Activated T-helper 1 cell treated with anti-CD3 and anti-CD28 coated beads, Interleukin-12 subunit alpha, Interleukin-12 subunit beta, Interleukin-2, Interleukin-4 antibody, amounts not matched to agents 30 ng/mL and 10 ng/mL and 1 ng/mL, durations not matched to agents 14 hours and 24 hours and 36 hours (primary cell): ENCODE measurements at regions of chr11 and their contacts with region 1.

Region 1: DNA sequence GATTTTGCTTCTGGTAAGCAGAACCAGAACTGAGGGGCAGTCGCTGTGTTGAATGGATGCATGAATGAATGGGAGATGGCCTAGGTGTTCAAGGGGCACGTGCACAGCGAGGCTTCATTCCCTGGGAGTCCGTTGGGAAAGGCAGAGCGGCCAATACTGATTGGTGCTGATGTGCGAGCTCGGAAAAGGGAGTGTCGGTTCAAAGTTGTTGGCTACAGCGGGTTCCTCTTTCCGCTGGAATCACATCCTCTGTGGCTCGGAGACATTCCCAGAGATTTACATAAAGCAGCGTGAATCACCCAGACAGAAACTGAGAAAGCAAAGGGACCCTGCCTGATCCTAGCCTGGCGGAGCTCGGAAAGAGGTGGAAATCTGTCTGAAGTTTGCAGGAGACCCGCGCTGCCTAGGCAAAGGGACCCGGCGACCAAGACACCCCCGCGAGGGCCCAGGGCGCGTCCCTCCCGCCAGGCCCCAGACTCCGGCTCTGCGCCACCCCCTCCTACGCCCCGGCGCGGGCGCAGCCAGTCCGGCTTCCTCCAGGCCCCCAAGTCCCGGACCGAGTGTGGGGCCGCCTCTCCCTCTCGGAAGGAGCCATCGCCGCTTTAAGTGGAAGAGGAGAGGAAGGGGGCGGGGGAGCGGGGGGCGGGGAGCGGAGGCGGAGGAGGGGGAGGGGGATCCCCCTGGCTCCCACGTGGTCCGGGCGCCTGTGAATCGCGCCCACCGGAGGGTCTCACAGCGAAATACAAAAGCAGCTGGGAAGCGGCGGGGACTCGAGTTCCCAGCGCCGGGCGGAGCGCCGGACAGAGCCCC is at the start of gene FJX1:
- DNase-seq: no peak
- H3K4me3 Mint-ChIP-seq: peak within 1 kb of the TSS; percentile 77
- H3K27ac Mint-ChIP-seq: peak within 1 kb of the TSS; percentile 40
- H3K4me1 Mint-ChIP-seq: peaks cover 7% of the 10 kb centered on the region
- H3K27me3 Mint-ChIP-seq: peaks cover 51% of the 10 kb centered on the region
- total RNA-seq, gene FJX1: 0.34 and 0.73 TPM in 2 replicates

Region 2: DNA sequence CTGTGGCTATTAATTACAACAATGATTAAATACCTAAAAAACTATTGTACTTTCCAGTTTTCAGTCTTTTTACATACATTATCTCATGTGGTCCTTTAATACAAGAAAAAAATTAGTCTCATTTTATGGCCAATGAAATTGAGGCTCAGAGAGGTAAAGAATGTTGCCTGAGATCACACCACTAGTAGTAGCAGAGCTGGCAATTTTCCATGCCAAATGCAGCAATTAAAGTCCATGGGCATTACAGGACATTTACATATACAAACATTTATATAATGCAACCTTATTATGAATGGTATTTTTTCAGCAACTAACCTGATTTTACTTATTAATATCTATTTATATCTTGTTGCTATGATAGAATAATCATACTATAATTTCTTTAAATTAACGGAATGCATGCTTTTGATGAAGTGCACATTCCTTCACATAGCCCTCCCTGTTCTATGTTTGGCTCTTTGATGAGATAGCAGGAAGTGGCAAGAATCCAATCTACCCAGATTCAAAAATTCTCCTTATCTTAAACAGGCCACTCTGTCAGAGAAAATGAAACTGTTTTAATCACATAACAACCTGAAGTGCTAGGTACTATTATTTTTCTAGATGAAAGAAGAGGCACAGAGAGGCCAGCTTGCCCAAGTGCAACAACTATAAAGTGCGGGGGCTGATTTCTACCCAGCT is 205.1 kb after region 1 on chr11:
- intact Hi-C with region 1: loop called (anchors 1 kb)
- DNase-seq: no peak
- H3K4me3 Mint-ChIP-seq: no peak overlapping the region
- H3K27ac Mint-ChIP-seq: no peak overlapping the region
- H3K4me1 Mint-ChIP-seq: no peaks in the 10 kb centered on the region
- H3K27me3 Mint-ChIP-seq: peaks cover 2% of the 10 kb centered on the region

Region 3: GRCh38 chr11:36056160-36056751 is 438.4 kb after region 1 on chr11:
- intact Hi-C with region 1: loop called (anchors 2 kb)
- DNase-seq: no peak
- H3K4me3 Mint-ChIP-seq: no peak overlapping the region
- H3K27ac Mint-ChIP-seq: no peak overlapping the region
- H3K4me1 Mint-ChIP-seq: no peaks in the 10 kb centered on the region
- H3K27me3 Mint-ChIP-seq: peaks cover 2% of the 10 kb centered on the region

Region 4: GRCh38 chr11:36258730-36259360 is 641.0 kb after region 1 on chr11:
- intact Hi-C with region 1: loop called (anchors 2 kb)
- DNase-seq: no peak
- H3K4me3 Mint-ChIP-seq: no peak overlapping the region
- H3K27ac Mint-ChIP-seq: no peak overlapping the region
- H3K4me1 Mint-ChIP-seq: no peaks in the 10 kb centered on the region
- H3K27me3 Mint-ChIP-seq: peaks cover 17% of the 10 kb centered on the region

Region 5: GRCh38 chr11:36492724-36493304 is 874.9 kb after region 1 on chr11:
- intact Hi-C with region 1: loop called (anchors 5 kb)
- DNase-seq: no peak
- H3K4me3 Mint-ChIP-seq: no peak overlapping the region
- H3K27ac Mint-ChIP-seq: no peak overlapping the region
- H3K4me1 Mint-ChIP-seq: peaks cover 18% of the 10 kb centered on the region
- H3K27me3 Mint-ChIP-seq: no peaks in the 10 kb centered on the region

Region 6: GRCh38 chr11:36854875-36855274 is 1237.0 kb after region 1 on chr11:
- intact Hi-C with region 1: no loop called
- DNase-seq: no peak
- H3K4me3 Mint-ChIP-seq: no peak overlapping the region
- H3K27ac Mint-ChIP-seq: no peak overlapping the region
- H3K4me1 Mint-ChIP-seq: no peaks in the 10 kb centered on the region
- H3K27me3 Mint-ChIP-seq: no peaks in the 10 kb centered on the region